ENCODE measurements at regions of chr17 and their contacts with region 1.

Region 1: GRCh38 chr17:57995076-57995956 is 7.3 kb upstream of the VEZF1 start:
- DNase-seq: no peak
- H3K4me3 ChIP-seq: no peak overlapping the region
- H3K27me3 ChIP-seq: no peaks in the 10 kb centered on the region
- CTCF ChIP-seq: peak; percentile 68

Region 2: GRCh38 chr17:57752031-57752905 is 243.0 kb before region 1 on chr17:
- CTCF ChIA-PET with region 1: no interaction called
- POLR2A ChIA-PET with region 1: no interaction called
- DNase-seq: no peak
- H3K4me3 ChIP-seq: no peak overlapping the region
- H3K27me3 ChIP-seq: peaks cover 4% of the 10 kb centered on the region
- CTCF ChIP-seq: no peak

Region 3: GRCh38 chr17:57833179-57833939 is 162.0 kb before region 1 on chr17:
- CTCF ChIA-PET with region 1: interaction called, 20 read pairs
- POLR2A ChIA-PET with region 1: no interaction called
- DNase-seq: no peak
- H3K4me3 ChIP-seq: peak overlapping the region; percentile 38
- H3K27me3 ChIP-seq: no peaks in the 10 kb centered on the region
- CTCF ChIP-seq: peak; percentile 89

Region 4: DNA sequence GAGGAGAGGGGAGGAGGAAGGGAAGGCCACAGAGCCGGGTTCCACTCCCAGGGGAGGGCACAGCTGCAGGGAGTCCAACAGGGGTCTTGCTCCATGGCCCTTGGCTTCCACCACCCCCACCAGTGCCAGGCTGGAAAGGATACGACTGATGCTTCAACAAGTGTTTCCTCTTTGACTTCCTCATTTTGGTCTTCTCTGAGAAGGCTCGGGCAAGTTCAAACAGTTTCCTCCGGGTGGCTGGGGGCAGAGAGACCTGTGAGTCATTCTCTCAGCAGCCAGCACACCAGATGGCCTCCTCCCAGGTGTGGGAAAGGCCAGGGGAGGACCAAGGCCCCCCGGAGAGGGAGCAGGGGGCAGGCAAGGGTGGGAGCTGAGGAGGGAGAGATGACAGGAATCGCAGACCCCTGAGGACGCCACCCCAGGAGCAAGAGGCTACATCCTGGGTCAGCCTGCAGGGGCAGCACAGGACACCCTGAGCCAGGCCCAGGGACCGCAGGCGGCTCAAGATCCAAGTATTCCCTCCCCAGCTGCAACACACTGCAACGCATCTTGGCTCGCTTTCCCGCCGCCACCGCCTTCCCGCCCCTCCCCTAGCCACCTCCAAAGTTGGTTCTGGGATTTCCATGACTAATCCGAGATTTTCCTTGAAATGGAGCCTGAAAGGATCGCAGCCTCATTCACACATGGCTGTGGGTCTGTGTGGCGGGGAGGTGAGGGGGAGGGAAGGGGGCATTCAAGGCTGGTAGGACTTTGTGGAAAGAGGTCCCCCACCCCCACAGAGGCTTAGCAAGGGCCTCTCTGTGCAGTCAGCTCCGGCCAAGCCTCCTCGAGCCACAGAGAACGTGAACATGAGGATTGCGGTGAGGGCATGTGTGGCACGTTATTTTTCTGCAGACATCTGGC is 127.1 kb before region 1 on chr17:
- CTCF ChIA-PET with region 1: interaction called, 371 read pairs
- POLR2A ChIA-PET with region 1: interaction called, 7 read pairs
- DNase-seq: peak; percentile 73
- H3K4me3 ChIP-seq: no peak overlapping the region
- H3K27me3 ChIP-seq: no peaks in the 10 kb centered on the region
- CTCF ChIP-seq: peak; percentile 72

Region 5: DNA sequence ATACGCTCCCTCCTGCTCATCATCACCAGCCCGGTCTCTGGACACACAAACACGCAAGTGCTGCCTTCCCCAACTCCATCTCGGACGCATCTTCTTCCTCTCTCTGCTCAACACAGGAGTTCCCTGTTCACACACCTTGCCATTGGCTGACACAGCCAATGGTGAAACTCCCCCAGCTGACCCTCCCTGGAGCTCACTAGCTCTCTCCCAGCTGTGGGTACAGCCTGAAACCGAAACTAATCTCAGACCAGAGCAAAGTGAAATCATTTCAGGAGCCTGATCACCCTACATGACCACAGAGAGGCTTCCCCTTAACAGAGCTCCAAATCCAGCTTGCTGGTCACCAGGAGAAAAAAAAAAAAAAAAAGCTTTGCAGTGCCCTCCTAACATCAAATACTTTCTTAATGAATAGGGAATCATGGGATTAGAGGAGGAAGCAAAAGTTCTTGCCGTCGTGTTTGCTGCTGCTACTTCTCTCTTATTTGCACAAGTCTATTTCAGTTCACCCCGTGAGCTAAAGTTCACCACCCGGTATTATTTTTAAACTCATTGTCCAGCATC is 48.4 kb before region 1 on chr17:
- CTCF ChIA-PET with region 1: interaction called, 23 read pairs
- POLR2A ChIA-PET with region 1: interaction called, 4 read pairs
- DNase-seq: no peak
- H3K4me3 ChIP-seq: peak overlapping the region; percentile 37
- H3K27me3 ChIP-seq: no peaks in the 10 kb centered on the region
- CTCF ChIP-seq: no peak

Region 6: GRCh38 chr17:58463821-58464220 is 468.5 kb after region 1 on chr17:
- CTCF ChIA-PET with region 1: no interaction called
- POLR2A ChIA-PET with region 1: interaction called, 12 read pairs
- DNase-seq: no peak
- H3K4me3 ChIP-seq: no peak overlapping the region
- H3K27me3 ChIP-seq: no peaks in the 10 kb centered on the region
- CTCF ChIP-seq: no peak

Measured in BJ (cell line).